Mammary epithelial cell (primary cell): ENCODE measurements at regions of chr7 and their contacts with region 1.

Region 1: GRCh38 chr7:150898475-150899011 is 46.2 kb downstream of the AOC1 start:
- DNase-seq: peak; percentile 46
- H3K4me3 ChIP-seq: no peak overlapping the region
- H3K27ac ChIP-seq: no peak overlapping the region
- H3K4me1 ChIP-seq: peaks cover 8% of the 10 kb centered on the region
- H3K27me3 ChIP-seq: peaks cover 2% of the 10 kb centered on the region
- CTCF ChIP-seq: peak; percentile 86 to 91

Region 2: DNA sequence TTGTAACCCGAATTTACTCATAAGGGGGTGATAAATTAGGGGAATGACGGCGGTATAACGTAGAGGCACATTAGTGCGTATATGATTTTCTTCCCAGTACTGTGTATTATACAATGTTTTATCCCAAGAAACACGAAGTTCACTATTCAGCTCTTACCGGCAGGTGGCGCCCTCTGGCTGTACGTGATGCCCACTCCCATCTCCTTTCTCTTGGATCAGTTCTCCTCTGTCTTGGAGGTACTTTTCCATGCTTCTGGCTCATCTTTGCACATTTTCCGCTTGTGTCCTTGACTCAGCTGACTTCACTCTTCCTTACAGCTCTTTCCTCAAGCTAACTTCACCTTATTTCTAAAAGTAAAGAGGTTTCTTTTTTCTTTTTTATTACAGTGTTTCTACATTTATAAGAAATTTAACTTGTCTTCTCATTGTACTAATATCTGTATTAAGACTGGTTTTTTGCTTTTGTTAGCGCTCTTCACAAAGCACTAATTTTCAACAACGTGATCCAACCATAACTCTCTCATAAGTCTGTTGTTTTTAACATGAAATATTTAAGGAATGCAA is 119.7 kb before region 1 on chr7:
- CTCF ChIA-PET with region 1: no interaction called
- dilution Hi-C with region 1: no loop called
- in situ Hi-C with region 1: no loop called
- intact Hi-C with region 1: loop called (anchors 5 kb)
- DNase-seq: peak; percentile 42
- H3K4me3 ChIP-seq: no peak overlapping the region
- H3K27ac ChIP-seq: no peak overlapping the region
- H3K4me1 ChIP-seq: no peaks in the 10 kb centered on the region
- H3K27me3 ChIP-seq: no peaks in the 10 kb centered on the region
- CTCF ChIP-seq: peak; percentile 86 to 92

Region 3: GRCh38 chr7:150937848-150938561 is 39.5 kb after region 1 on chr7:
- CTCF ChIA-PET with region 1: no interaction called
- dilution Hi-C with region 1: no loop called
- in situ Hi-C with region 1: no loop called
- intact Hi-C with region 1: loop called (anchors 2 kb)
- DNase-seq: peak; percentile 79
- H3K4me3 ChIP-seq: no peak overlapping the region
- H3K27ac ChIP-seq: no peak overlapping the region
- H3K4me1 ChIP-seq: peaks cover 56% of the 10 kb centered on the region
- H3K27me3 ChIP-seq: no peaks in the 10 kb centered on the region
- CTCF ChIP-seq: no peak

Region 4: DNA sequence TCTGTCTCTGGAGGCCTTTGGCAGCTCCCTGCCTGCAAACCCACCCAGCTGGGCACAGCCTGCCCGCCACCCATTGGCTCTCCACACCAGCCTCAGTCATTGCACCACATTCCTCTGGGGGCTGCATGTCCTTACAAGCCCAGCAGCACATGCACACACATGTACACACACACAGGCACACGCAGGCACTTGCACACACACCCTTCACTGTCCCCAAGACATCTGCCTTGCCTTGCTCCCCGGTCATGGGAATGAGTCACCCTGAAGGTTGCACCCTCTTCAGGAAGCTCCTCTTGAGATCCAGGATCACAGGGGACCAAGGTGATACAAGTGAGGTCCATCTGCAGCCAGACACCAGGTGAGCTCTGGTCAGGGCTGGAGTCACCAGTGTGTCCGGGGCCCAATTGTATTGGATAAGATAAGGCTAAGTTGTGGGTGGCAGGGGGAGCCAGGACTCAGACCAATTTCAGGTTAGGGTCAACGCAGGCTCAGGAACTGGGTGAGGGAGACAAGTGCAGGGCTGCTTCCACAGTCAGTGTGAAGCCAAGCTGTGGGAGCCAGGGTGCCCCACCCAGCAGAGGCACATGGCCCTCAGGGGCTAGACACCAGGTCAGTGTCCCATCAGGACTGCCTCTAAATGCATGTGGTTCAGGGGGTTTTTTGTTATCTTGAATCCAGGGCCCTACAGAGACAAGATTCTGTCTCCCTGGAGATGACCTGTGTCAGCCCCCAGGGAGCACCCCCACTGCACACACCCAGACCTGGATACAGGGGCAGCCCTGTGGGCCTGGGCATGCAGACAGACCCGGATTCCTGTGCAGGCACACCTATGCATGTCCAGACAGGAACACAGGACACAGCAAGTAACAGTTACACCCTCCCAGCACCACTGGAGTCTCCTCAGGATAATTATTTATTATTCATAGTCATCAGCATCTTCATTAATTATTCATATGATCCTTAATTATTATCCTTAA is 45.8 kb after region 1 on chr7:
- CTCF ChIA-PET with region 1: no interaction called
- dilution Hi-C with region 1: no loop called
- in situ Hi-C with region 1: no loop called
- intact Hi-C with region 1: loop called (anchors 1 kb)
- DNase-seq: peak; percentile 85
- H3K4me3 ChIP-seq: no peak overlapping the region
- H3K27ac ChIP-seq: peak overlapping the region; percentile 64
- H3K4me1 ChIP-seq: peaks cover 66% of the 10 kb centered on the region
- H3K27me3 ChIP-seq: no peaks in the 10 kb centered on the region
- CTCF ChIP-seq: no peak

Region 5: DNA sequence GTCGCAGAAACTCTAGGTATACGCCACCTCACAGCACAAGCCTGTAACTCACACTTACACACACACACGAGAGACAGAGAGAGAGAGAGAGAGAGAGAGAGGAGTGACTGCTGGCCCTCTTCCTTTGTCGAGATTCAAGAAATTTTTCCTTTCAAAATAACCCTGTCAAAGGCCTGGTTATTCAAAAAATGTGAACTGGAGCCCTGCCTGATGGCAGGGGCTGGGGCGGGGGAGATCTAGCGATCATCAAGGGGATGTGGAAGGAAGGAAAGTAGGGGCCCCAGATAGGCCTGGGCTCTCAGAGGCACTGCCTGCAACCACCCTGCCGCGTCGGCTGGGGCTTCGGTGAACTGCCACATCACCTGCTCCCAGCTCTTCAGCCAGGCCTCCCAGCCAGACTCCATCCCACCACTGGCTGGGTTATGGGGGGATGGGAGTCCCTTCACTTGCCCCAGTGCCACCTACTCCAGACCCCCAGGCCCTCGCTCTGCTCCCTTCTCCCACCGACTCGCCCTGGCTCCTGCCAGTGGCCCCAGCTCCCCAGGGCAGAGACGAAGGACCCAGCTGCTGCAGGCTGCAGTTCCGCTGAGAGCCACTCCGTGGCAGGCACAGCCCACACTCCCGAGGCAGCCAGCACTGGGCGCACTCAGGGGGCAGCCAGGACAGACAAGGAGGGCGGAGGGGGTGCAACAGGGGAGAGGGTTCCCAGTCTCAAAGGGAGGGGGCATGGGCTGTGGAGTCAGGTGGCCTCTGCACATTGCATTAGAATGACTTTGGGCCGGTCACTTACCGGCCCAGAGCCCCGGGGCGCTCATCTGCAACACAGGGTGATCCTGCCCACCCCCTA is 64.2 kb after region 1 on chr7:
- CTCF ChIA-PET with region 1: no interaction called
- dilution Hi-C with region 1: no loop called
- in situ Hi-C with region 1: no loop called
- intact Hi-C with region 1: loop called (anchors 1 kb)
- DNase-seq: no peak
- H3K4me3 ChIP-seq: no peak overlapping the region
- H3K27ac ChIP-seq: no peak overlapping the region
- H3K4me1 ChIP-seq: peaks cover 6% of the 10 kb centered on the region
- H3K27me3 ChIP-seq: peaks cover 3% of the 10 kb centered on the region
- CTCF ChIP-seq: peak; percentile 90 to 93

Region 6: GRCh38 chr7:151122276-151122675 is 223.7 kb after region 1 on chr7:
- CTCF ChIA-PET with region 1: no interaction called
- dilution Hi-C with region 1: no loop called
- in situ Hi-C with region 1: no loop called
- intact Hi-C with region 1: no loop called
- DNase-seq: no peak
- H3K4me3 ChIP-seq: no peak overlapping the region
- H3K27ac ChIP-seq: no peak overlapping the region
- H3K4me1 ChIP-seq: peaks cover 4% of the 10 kb centered on the region
- H3K27me3 ChIP-seq: no peaks in the 10 kb centered on the region
- CTCF ChIP-seq: no peak